ENCODE measurements at regions of chr3 and their contacts with region 1.

Region 1: GRCh38 chr3:89405176-89405575 is 297.8 kb downstream of the EPHA3 start:
- DNase-seq: no peak
- CTCF ChIP-seq: no peak

Region 2: GRCh38 chr3:89419647-89420241 is 14.6 kb after region 1 on chr3:
- CTCF ChIA-PET with region 1: interaction called, 12 read pairs
- POLR2A ChIA-PET with region 1: no interaction called
- DNase-seq: no peak
- CTCF ChIP-seq: no peak